ENCODE measurements at regions of chr11 and their contacts with region 1.

Region 1: GRCh38 chr11:118870396-118871345 is 13.0 kb upstream of the CXCR5 start:
- DNase-seq: peak in 11 of 35 experiments; percentile 14 to 62 (median 26)
- ATAC-seq: peak; percentile 36 to 60 (median 53)
- H3K4me3 ChIP-seq: peak overlapping the region; percentile 35 to 51
- H3K4me3 Mint-ChIP-seq: peak overlapping the region; percentile 69 to 86 (median 71)
- H3K27ac ChIP-seq: peak overlapping the region; percentile 100
- H3K27ac Mint-ChIP-seq: peak overlapping the region; percentile 95 to 98
- H3K4me1 ChIP-seq: peaks cover 29 to 67% of the 10 kb centered on the region in 2 experiments
- H3K4me1 Mint-ChIP-seq: peaks cover 58 to 64% (median 59%) of the 10 kb centered on the region in 3 donors
- H3K27me3 ChIP-seq: no peaks in the 10 kb centered on the region
- H3K27me3 Mint-ChIP-seq: no peaks in the 10 kb centered on the region

Region 2: GRCh38 chr11:118883368-118884071 is 12.8 kb after region 1 on chr11 and contains the start of gene CXCR5:
- CTCF ChIA-PET with region 1: interaction called in 1 of 2 experiments, 13 read pairs
- POLR2A ChIA-PET with region 1: interaction called, 5 to 6 read pairs
- DNase-seq: peak in 6 of 35 experiments; percentile 15 to 68 (median 40)
- ATAC-seq: peak; percentile 32 to 72 (median 52)
- H3K4me3 ChIP-seq: peak within 1 kb of the TSS in 1 of 2 donors; percentile 46
- H3K4me3 Mint-ChIP-seq: peak within 1 kb of the TSS; percentile 68 to 79 (median 77)
- H3K27ac ChIP-seq: peak within 1 kb of the TSS; percentile 75
- H3K27ac Mint-ChIP-seq: peak within 1 kb of the TSS; percentile 82 to 88
- H3K4me1 ChIP-seq: peaks cover 30 to 85% of the 10 kb centered on the region in 2 experiments
- H3K4me1 Mint-ChIP-seq: peaks cover 74 to 81% (median 75%) of the 10 kb centered on the region in 3 donors
- H3K27me3 ChIP-seq: no peaks in the 10 kb centered on the region
- H3K27me3 Mint-ChIP-seq: no peaks in the 10 kb centered on the region
- total RNA-seq, gene CXCR5: 4.7 to 10.6 (median 6.3) TPM

Region 3: GRCh38 chr11:118889781-118890180 is 19.1 kb after region 1 on chr11:
- CTCF ChIA-PET with region 1: interaction called, 3 to 13 read pairs
- POLR2A ChIA-PET with region 1: interaction called, 8 to 13 read pairs
- DNase-seq: no peak
- ATAC-seq: no peak
- H3K4me3 ChIP-seq: no peak overlapping the region
- H3K4me3 Mint-ChIP-seq: peak overlapping the region in 1 of 3 donors; percentile 88
- H3K27ac ChIP-seq: peak overlapping the region; percentile 11
- H3K27ac Mint-ChIP-seq: peak overlapping the region; percentile 83 to 86
- H3K4me1 ChIP-seq: peaks cover 27 to 93% of the 10 kb centered on the region in 2 experiments
- H3K4me1 Mint-ChIP-seq: peaks cover 81 to 88% (median 81%) of the 10 kb centered on the region in 3 donors
- H3K27me3 ChIP-seq: no peaks in the 10 kb centered on the region
- H3K27me3 Mint-ChIP-seq: no peaks in the 10 kb centered on the region

Region 4: GRCh38 chr11:118895142-118896039 is 24.7 kb after region 1 on chr11:
- CTCF ChIA-PET with region 1: interaction called, 4 to 11 read pairs
- POLR2A ChIA-PET with region 1: interaction called, 8 to 13 read pairs
- DNase-seq: peak; percentile 58 to 90 (median 79)
- ATAC-seq: peak; percentile 60 to 78 (median 67)
- H3K4me3 ChIP-seq: peak overlapping the region; percentile 13 to 52
- H3K4me3 Mint-ChIP-seq: peak overlapping the region; percentile 66 to 88 (median 66)
- H3K27ac ChIP-seq: peak overlapping the region; percentile 92
- H3K27ac Mint-ChIP-seq: peak overlapping the region; percentile 97 to 99
- H3K4me1 ChIP-seq: peaks cover 40 to 99% of the 10 kb centered on the region in 2 experiments
- H3K4me1 Mint-ChIP-seq: peaks cover 78 to 83% (median 82%) of the 10 kb centered on the region in 3 donors
- H3K27me3 ChIP-seq: no peaks in the 10 kb centered on the region
- H3K27me3 Mint-ChIP-seq: no peaks in the 10 kb centered on the region

Region 5: GRCh38 chr11:119106564-119107537 is 236.2 kb after region 1 on chr11 and contains the start of gene C2CD2L:
- CTCF ChIA-PET with region 1: no interaction called
- POLR2A ChIA-PET with region 1: no interaction called
- DNase-seq: peak; percentile 68 to 94 (median 83)
- ATAC-seq: peak; percentile 88 to 93 (median 89)
- H3K4me3 ChIP-seq: peak within 1 kb of the TSS; percentile 69 to 83
- H3K4me3 Mint-ChIP-seq: peak within 1 kb of the TSS; percentile 81 to 94 (median 92)
- H3K27ac ChIP-seq: peak within 1 kb of the TSS; percentile 52
- H3K27ac Mint-ChIP-seq: peak within 1 kb of the TSS; percentile 86 to 89
- H3K4me1 ChIP-seq: peaks cover 16 to 51% of the 10 kb centered on the region in 2 experiments
- H3K4me1 Mint-ChIP-seq: peaks cover 49 to 61% (median 57%) of the 10 kb centered on the region in 3 donors
- H3K27me3 ChIP-seq: no peaks in the 10 kb centered on the region
- H3K27me3 Mint-ChIP-seq: no peaks in the 10 kb centered on the region
- total RNA-seq, gene C2CD2L: 18.9 to 36.4 (median 30.6) TPM

Region 6: DNA sequence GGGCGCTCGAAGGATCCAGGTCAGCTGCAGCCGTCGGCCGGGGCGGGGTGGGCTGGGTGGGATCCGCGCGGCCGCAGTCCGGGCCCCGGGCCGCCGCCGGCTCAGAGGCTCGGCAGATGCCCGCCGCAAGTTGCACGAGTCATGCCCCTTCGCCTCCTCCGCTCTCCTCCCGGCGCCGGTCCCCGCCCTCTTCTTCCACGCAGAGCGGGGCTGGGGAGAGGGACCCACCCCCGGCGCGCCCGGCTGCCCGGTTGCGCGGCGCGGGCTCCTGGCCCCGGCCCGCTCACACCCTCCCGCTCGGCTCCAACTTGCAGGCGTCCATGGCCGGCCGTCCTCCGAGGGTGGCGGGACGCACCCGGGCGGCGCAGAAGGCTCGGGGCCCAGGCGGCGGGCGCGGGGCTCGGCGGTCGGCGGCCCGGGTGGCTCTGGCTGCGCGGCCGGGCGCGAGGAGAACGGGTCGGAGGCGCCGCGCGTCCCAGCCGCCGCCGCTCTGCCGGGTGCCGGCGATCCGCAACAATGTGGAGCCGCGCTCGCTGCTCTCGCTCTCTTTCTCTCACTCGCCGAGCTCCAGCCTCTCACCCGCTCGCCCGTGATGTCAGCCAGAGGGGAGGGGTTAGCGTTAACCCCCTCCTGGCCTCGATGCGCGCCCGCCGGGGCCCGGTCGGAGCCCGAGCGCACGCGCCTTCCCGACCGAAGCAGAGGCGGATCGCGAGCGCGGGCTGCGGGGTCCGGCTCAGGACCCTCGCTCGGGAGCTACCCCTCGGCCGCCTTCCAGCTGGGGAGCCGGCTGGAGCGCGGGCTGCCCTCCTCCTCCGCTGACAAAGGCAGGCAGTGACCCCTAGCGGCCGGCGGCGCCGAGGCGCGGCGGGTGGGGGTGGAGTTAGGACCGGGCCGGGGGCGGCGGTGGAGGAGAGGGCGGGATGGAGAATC is 858.2 kb after region 1 on chr11 and contains the start of gene NECTIN1:
- CTCF ChIA-PET with region 1: no interaction called
- POLR2A ChIA-PET with region 1: no interaction called
- DNase-seq: peak; percentile 63 to 87 (median 79)
- ATAC-seq: peak; percentile 88 to 90 (median 88)
- H3K4me3 ChIP-seq: peak within 1 kb of the TSS; percentile 61 to 82
- H3K4me3 Mint-ChIP-seq: peak within 1 kb of the TSS; percentile 79 to 93 (median 88)
- H3K27ac ChIP-seq: no peak within 1 kb of the TSS
- H3K27ac Mint-ChIP-seq: peak within 1 kb of the TSS; percentile 58 to 59
- H3K4me1 ChIP-seq: peaks cover 11 to 28% of the 10 kb centered on the region in 2 experiments
- H3K4me1 Mint-ChIP-seq: peaks cover 5 to 22% (median 12%) of the 10 kb centered on the region in 3 donors
- H3K27me3 ChIP-seq: peaks cover 5 to 52% of the 10 kb centered on the region in 2 experiments
- H3K27me3 Mint-ChIP-seq: peaks cover 9 to 18% of the 10 kb centered on the region in 2 donors
- total RNA-seq, gene NECTIN1: 1.8 to 3.5 (median 3.1) TPM

Measured in T-cell (primary cell).